Breast epithelium (tissue), 4 donors: ENCODE measurements at regions of chr14 and their contacts with region 1.

Region 1: GRCh38 chr14:37320106-37320505 is 122.4 kb downstream of the MIPOL1 start:
- DNase-seq: no peak
- H3K4me3 ChIP-seq: no peak overlapping the region
- H3K27ac ChIP-seq: no peak overlapping the region
- H3K4me1 ChIP-seq: no peaks in the 10 kb centered on the region
- H3K27me3 ChIP-seq: no peaks in the 10 kb centered on the region
- CTCF ChIP-seq: no peak
- POLR2A ChIP-seq: no peak

Region 2: GRCh38 chr14:37343307-37344094 is 23.4 kb after region 1 on chr14:
- intact Hi-C with region 1: loop called (anchors 2 kb)
- DNase-seq: no peak
- H3K4me3 ChIP-seq: no peak overlapping the region
- H3K27ac ChIP-seq: no peak overlapping the region
- H3K4me1 ChIP-seq: no peaks in the 10 kb centered on the region
- H3K27me3 ChIP-seq: no peaks in the 10 kb centered on the region
- CTCF ChIP-seq: no peak
- POLR2A ChIP-seq: no peak

Region 3: DNA sequence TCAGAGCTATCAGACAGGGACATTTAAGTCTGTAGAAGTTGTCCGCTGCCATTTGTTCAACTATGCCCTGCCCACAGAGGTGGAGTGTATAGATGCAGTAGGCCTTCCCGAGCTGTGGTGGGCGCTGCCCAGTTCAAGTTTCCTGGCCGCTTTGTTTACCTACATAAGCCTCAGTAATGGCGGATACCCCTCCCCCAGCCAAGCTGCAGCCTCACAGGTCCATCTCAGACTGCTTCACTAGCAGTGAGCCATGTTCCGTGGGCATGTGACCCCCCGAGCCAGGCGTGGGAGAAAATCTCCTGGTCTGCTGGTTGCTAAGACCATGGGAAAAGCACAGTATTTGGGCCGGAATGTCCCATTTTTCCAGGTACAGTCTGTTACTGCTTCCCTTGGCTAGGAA is 43.6 kb after region 1 on chr14:
- intact Hi-C with region 1: no loop called
- DNase-seq: no peak
- H3K4me3 ChIP-seq: no peak overlapping the region
- H3K27ac ChIP-seq: no peak overlapping the region
- H3K4me1 ChIP-seq: no peaks in the 10 kb centered on the region
- H3K27me3 ChIP-seq: no peaks in the 10 kb centered on the region
- CTCF ChIP-seq: no peak
- POLR2A ChIP-seq: no peak

Region 4: GRCh38 chr14:37480446-37481290 is 160.6 kb after region 1 on chr14:
- intact Hi-C with region 1: no loop called
- DNase-seq: no peak
- H3K4me3 ChIP-seq: no peak overlapping the region
- H3K27ac ChIP-seq: no peak overlapping the region
- H3K4me1 ChIP-seq: no peaks in the 10 kb centered on the region
- H3K27me3 ChIP-seq: no peaks in the 10 kb centered on the region
- CTCF ChIP-seq: no peak
- POLR2A ChIP-seq: no peak